WTC11 (cell line): ENCODE measurements at regions of chr2 and their contacts with region 1.

Region 1: DNA sequence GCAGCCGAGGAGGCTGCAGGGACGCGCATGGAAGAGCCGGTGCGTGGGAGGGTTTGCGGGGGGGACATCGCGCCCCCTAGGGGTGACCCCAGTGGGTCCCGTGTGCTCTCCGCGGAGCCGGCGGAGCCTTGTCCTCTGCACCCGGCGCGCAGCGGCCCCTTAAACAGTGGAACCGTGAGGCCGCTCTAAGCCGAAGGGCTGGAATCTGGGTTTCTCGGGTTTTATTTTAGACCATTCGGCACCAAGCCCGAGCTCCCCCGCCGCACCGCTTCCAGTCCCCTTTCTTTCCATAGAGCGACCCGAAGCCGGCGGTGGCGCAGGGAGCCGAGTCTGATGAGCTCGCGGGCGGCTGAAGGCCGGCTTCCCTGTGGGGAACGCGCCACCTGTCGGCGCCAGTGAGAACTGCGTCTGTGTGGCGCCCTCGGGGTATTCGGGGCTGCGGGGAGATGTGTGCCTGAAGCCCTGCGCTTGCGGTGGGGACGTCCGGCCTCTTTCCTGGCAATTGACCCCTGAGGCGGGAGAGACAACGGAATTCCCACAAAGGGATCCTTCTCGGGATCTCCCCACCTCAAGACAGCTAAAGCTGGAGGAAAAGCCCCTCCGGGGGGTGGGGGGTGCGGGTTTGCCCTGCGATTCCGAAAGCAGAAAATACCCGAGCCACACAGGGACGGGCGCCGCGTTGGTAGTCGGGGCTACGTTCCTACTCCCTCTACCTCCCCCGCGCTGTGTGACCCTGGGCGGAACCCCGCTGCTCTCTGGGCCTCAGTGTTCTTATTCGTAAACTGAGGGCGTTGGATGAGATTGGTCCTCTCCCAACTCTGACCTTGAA is 8.2 kb upstream of the EN1 start:
- DNase-seq: peak; percentile 94
- ATAC-seq: peak; percentile 54
- H3K4me3 Mint-ChIP-seq: peak overlapping the region; percentile 59
- H3K27ac Mint-ChIP-seq: no peak overlapping the region
- H3K4me1 Mint-ChIP-seq: peaks cover 60% of the 10 kb centered on the region
- H3K27me3 Mint-ChIP-seq: peaks cover 100% of the 10 kb centered on the region
- CTCF ChIP-seq: peak; percentile 97

Region 2: GRCh38 chr2:118221666-118222594 is 633.7 kb before region 1 on chr2:
- CTCF ChIA-PET with region 1: interaction called, 15 read pairs
- POLR2A ChIA-PET with region 1: no interaction called
- DNase-seq: no peak
- ATAC-seq: peak; percentile 60
- H3K4me3 Mint-ChIP-seq: no peak overlapping the region
- H3K27ac Mint-ChIP-seq: no peak overlapping the region
- H3K4me1 Mint-ChIP-seq: peaks cover 33% of the 10 kb centered on the region
- H3K27me3 Mint-ChIP-seq: peaks cover 29% of the 10 kb centered on the region
- CTCF ChIP-seq: peak; percentile 58

Region 3: DNA sequence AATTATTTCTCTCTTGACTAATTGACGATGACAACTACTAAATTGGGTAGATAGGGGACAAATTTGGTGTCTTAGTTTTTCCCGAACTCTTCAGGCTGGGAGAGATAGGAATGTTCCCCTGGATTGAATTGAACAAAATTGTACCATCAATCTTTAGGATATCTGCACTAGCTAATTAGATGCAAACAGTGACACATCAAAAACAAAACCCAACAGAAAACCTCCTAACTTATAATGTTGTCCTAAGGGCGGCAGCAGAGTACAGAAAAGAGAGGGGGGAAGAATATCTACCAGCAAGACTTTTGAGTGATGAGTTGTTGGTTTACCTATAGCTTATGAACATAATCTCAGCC is 424.5 kb before region 1 on chr2:
- CTCF ChIA-PET with region 1: interaction called, 13 read pairs
- POLR2A ChIA-PET with region 1: no interaction called
- DNase-seq: no peak
- ATAC-seq: no peak
- H3K4me3 Mint-ChIP-seq: no peak overlapping the region
- H3K27ac Mint-ChIP-seq: no peak overlapping the region
- H3K4me1 Mint-ChIP-seq: peaks cover 30% of the 10 kb centered on the region
- H3K27me3 Mint-ChIP-seq: no peaks in the 10 kb centered on the region; the same call in 1 of the 2 replicates
- CTCF ChIP-seq: no peak

Region 4: GRCh38 chr2:118806797-118807667 is 48.6 kb before region 1 on chr2:
- CTCF ChIA-PET with region 1: interaction called, 16 read pairs
- POLR2A ChIA-PET with region 1: no interaction called
- DNase-seq: peak; percentile 20
- ATAC-seq: peak; percentile 46
- H3K4me3 Mint-ChIP-seq: peak overlapping the region; percentile 69
- H3K27ac Mint-ChIP-seq: peak overlapping the region; percentile 48
- H3K4me1 Mint-ChIP-seq: peaks cover 52% of the 10 kb centered on the region
- H3K27me3 Mint-ChIP-seq: peaks cover 10% of the 10 kb centered on the region; the same call in 1 of the 2 replicates
- CTCF ChIP-seq: no peak

Region 5: GRCh38 chr2:118834901-118835745 is 20.5 kb before region 1 on chr2:
- CTCF ChIA-PET with region 1: interaction called, 22 read pairs
- POLR2A ChIA-PET with region 1: no interaction called
- DNase-seq: no peak
- ATAC-seq: peak; percentile 55
- H3K4me3 Mint-ChIP-seq: peak overlapping the region; percentile 73
- H3K27ac Mint-ChIP-seq: no peak overlapping the region
- H3K4me1 Mint-ChIP-seq: peaks cover 37% of the 10 kb centered on the region
- H3K27me3 Mint-ChIP-seq: peaks cover 100% of the 10 kb centered on the region
- CTCF ChIP-seq: no peak